Activated B cell treated with CpG ODN at 0.5 μM for 24 hours (primary cell): ENCODE measurements at regions of chr2 and their contacts with region 1.

Region 1: DNA sequence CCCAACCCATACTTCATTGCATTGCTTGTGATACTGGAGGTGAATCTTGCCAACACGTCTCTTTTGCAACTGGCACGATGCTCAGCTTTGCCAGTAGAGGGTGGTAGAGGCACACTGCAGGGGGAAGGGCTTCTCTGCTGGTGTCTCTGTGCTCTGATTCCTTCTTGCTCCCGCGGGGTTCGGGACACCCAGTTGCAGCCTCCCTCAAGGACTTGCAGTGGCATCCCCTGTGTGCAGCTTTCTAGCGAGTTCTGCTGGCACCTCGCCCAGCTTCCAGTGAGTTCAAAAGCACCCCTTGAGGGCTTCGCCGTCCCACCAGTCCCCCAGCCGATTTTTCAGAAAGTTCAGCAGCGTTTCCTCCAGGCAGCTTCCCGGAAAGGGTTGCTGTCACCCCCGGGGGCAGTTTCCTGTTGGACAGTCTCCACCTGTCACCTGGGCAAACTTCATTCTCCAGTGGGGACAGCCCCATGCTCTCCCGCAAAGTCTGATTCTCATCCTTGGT is 35.3 kb upstream of the EN1 start:
- DNase-seq: peak; percentile 24
- ATAC-seq: peak; percentile 85
- H3K4me3 Mint-ChIP-seq: peak overlapping the region; percentile 80
- H3K27ac Mint-ChIP-seq: no peak overlapping the region
- H3K4me1 Mint-ChIP-seq: peaks cover 8% of the 10 kb centered on the region
- H3K27me3 Mint-ChIP-seq: peaks cover 16% of the 10 kb centered on the region
- CTCF ChIP-seq: no peak

Region 2: GRCh38 chr2:118936306-118936705 is 53.5 kb after region 1 on chr2:
- CTCF ChIA-PET with region 1: no interaction called
- POLR2A ChIA-PET with region 1: no interaction called
- intact Hi-C with region 1: no loop called
- DNase-seq: no peak
- ATAC-seq: no peak
- H3K4me3 Mint-ChIP-seq: no peak overlapping the region
- H3K27ac Mint-ChIP-seq: no peak overlapping the region
- H3K4me1 Mint-ChIP-seq: peaks cover 2% of the 10 kb centered on the region
- H3K27me3 Mint-ChIP-seq: peaks cover 2% of the 10 kb centered on the region
- CTCF ChIP-seq: no peak

Region 3: DNA sequence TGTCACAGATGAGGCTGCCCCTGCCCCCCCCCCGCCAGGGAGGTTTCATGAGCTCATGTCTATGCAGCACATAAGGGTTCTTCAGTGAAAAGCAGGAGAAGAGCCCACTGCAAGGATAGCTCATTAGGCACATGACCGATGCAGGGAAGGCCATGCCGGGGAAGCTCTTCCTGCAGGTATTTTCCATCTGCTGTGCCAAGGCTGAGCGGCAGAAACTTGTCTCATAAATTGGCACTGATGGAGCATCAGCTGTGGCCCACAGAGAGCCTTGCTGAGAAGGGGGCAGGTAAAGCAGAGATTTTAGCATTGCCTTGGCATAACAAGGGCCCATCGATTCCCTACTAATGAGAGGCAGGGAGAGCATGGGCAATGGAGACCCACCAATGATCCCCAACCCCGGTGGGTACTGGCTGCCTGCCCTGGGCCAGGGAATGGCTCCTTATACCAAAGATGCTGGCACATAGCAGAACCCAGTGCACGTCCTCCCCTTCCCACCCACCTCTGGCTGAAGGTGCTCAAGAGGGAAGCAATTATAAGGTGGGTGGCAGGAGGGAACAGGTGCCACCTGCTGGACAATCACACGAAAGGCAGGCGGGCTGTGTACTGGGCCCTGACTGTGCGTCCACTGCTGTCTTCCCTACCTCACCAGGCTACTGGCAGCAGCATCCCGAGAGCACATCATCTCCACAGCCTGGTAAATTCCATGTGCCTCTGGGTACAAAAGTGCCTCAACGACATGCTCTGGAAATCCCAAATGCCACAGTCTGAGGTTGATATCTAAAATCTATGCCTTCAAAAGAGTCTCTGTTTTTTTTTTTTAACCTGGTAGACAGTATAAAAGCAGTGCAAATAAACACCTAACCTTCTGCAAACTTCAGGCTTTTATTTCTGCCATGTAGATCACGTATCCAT is 382.3 kb after region 1 on chr2:
- CTCF ChIA-PET with region 1: interaction called, 16 read pairs
- POLR2A ChIA-PET with region 1: no interaction called
- intact Hi-C with region 1: no loop called
- DNase-seq: no peak
- ATAC-seq: peak; percentile 56
- H3K4me3 Mint-ChIP-seq: no peak overlapping the region
- H3K27ac Mint-ChIP-seq: no peak overlapping the region
- H3K4me1 Mint-ChIP-seq: no peaks in the 10 kb centered on the region
- H3K27me3 Mint-ChIP-seq: peaks cover 2% of the 10 kb centered on the region
- CTCF ChIP-seq: no peak

Region 4: DNA sequence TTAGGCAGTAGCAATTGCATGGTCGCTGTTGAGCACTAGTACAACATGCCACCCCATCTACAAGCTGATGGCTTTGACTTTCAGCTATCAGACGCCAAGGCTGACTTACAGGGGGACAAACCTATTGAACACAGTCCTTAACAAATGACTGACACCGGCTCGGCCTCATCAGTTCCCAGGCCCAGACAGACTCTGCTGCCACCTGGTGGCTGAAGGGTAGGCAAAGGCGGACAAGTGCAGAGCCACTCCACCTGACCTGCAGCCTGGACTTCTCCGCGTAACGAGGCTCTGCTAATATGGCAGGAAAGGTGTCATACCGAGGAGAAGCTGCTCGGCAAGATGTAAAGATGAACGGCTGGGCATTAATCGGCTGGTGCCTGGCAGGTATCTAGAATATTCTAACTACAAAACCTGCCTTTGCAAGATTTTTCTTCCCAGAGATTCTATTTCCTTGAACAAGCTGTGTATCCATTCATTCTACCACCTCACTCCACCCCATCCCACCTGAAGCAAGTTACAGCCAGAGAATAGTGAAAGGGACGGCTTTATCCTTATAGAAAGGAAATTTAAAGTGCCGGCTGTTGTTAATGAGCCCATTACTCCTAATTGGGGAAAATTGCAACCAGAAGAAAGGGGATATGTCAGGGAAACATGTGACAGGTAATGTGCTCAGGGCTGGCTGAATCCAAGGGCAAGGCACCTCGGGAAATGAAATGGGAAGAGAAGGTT is 408.3 kb after region 1 on chr2:
- CTCF ChIA-PET with region 1: interaction called, 29 read pairs
- POLR2A ChIA-PET with region 1: no interaction called
- intact Hi-C with region 1: loop called (anchors 1 kb)
- DNase-seq: peak; percentile 37
- ATAC-seq: peak; percentile 75
- H3K4me3 Mint-ChIP-seq: no peak overlapping the region
- H3K27ac Mint-ChIP-seq: no peak overlapping the region
- H3K4me1 Mint-ChIP-seq: peaks cover 3% of the 10 kb centered on the region
- H3K27me3 Mint-ChIP-seq: no peaks in the 10 kb centered on the region
- CTCF ChIP-seq: peak; percentile 30

Region 5: DNA sequence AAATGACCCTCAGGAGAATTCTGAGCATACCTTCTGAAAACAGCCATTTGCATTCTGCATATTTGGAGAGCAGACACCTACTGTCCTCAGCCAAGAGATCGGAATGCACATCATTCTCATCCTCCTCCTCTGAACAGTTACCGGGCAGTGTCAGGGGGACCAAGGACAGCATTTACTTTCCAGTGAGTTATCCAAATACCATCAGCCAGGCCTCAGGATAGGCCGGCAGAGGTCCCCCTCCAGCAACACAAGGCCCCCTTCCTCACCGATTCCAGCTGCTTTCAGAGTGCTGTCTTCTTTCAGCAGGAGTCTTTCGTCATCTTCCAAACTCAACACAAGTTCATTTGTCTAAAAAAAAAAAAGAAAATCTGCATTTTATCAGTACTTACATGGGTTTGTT is 428.6 kb after region 1 on chr2:
- CTCF ChIA-PET with region 1: interaction called, 12 read pairs
- POLR2A ChIA-PET with region 1: no interaction called
- intact Hi-C with region 1: loop called (anchors 1 kb)
- DNase-seq: no peak
- ATAC-seq: no peak
- H3K4me3 Mint-ChIP-seq: no peak overlapping the region
- H3K27ac Mint-ChIP-seq: no peak overlapping the region
- H3K4me1 Mint-ChIP-seq: peaks cover 14% of the 10 kb centered on the region
- H3K27me3 Mint-ChIP-seq: no peaks in the 10 kb centered on the region
- CTCF ChIP-seq: no peak

Region 6: GRCh38 chr2:119338826-119339561 is 456.2 kb after region 1 on chr2:
- CTCF ChIA-PET with region 1: no interaction called
- POLR2A ChIA-PET with region 1: no interaction called
- intact Hi-C with region 1: no loop called
- DNase-seq: no peak
- ATAC-seq: peak; percentile 97
- H3K4me3 Mint-ChIP-seq: peak overlapping the region; percentile 29
- H3K27ac Mint-ChIP-seq: peak overlapping the region; percentile 85
- H3K4me1 Mint-ChIP-seq: peaks cover 31% of the 10 kb centered on the region
- H3K27me3 Mint-ChIP-seq: no peaks in the 10 kb centered on the region
- CTCF ChIP-seq: no peak